Heart right ventricle (tissue), 16 donors: ENCODE measurements at regions of chr11 and their contacts with region 1.

Region 1: DNA sequence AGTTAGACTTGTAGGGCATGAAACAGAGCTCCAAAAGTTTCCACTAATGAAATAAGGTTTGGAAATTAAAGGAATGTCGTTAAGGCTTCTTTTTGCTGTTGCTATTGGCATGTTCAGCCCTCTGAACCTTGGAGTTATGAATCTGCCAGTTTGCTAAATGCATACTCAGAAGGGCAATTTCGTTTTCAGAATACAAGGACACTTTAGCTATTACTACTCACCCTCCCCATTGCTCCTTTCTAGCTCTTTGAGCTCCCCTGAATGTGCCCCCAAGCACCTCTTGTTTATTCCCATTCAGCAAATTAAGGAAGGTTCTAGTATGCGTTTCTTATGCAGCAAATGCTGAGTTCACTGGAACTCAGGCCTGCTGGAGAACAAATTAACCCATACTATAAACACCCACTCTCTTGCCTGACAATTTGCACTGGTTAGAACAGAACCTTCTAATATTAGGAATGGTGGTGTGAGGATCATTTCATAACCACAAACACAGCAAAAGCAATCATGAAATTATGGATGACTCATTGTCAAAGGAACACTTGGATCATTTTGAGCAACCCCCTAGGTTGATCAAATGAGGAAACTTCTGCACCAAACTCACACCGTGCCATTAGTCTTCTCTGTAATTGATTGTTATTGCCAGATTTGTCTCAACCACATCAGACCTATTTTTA is 26.2 kb upstream of the LIN7C start:
- DNase-seq: no peak
- ATAC-seq: peak in 1 of 8 donors; percentile 13
- H3K4me3 ChIP-seq: no peak overlapping the region
- H3K27ac ChIP-seq: no peak overlapping the region
- H3K4me1 ChIP-seq: no peaks in the 10 kb centered on the region
- H3K27me3 ChIP-seq: no peaks in the 10 kb centered on the region
- CTCF ChIP-seq: no peak

Region 2: DNA sequence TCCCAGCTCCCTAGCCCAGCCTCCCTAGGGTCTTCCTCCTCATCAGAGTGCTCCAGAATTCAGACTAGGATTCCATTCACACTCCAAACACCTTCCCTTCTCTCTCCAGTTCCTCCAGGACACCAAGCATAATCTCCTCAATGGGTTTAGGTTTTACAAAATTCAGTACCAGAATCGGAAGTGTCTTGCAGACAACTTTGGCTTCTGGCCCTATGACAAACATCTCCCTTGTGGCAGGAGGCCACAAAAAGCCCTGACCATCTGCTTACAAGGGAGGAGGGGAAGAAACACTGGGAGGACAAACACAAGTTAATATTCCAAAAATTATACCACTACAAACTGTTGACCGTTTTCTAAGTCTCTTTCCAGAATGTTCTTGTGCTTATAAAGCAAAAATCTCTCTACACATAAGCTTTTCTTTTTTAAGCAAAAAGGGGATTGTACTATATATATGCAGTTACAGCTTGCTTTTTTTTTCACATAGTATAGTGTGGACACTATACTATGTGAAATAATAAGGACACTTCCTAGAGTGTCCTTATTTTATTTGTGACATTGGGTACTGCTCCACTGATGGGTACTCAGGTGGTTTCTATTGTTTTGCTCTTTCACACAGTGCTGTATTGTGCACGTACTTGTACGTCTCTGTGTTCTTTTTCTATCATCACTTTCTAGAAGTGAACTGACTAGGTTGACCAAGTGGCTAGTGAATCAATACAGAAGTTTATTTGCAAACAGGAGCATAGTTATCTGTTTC is 88.8 kb after region 1 on chr11:
- intact Hi-C with region 1: loop called in 1 of 10 experiments (anchors 10 kb)
- DNase-seq: peak in 1 of 2 donors; percentile 24
- ATAC-seq: peak in 5 of 8 donors; percentile 34 to 61 (median 39)
- H3K4me3 ChIP-seq: no peak overlapping the region
- H3K27ac ChIP-seq: no peak overlapping the region
- H3K4me1 ChIP-seq: peaks cover 0 to 24% (median 18%) of the 10 kb centered on the region in 9 donors
- H3K27me3 ChIP-seq: no peaks in the 10 kb centered on the region
- CTCF ChIP-seq: no peak

Region 3: DNA sequence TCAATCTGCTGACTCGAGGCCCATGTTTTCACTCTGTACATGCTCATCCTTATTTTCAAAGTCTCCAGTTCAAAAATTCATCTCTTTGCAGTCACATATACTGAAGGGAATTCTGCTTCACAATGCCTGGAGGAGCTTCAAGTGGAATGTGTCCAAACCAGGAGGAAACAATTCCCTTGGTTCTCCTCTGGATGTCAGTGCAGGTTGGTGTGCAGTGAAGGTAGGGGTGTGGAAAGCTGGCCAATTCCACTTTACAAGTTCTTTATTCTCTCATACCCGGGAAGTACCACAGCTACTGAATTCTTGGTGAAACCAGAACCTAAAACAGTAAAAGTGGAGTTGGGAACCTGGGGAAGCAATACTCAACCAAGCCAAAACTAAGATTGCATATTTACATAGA is 110.2 kb after region 1 on chr11:
- intact Hi-C with region 1: loop called in 2 of 10 experiments (anchors 10 kb)
- DNase-seq: no peak
- ATAC-seq: peak in 1 of 8 donors; percentile 22
- H3K4me3 ChIP-seq: no peak overlapping the region
- H3K27ac ChIP-seq: no peak overlapping the region
- H3K4me1 ChIP-seq: peaks cover 0 to 18% (median 0%) of the 10 kb centered on the region in 9 donors
- H3K27me3 ChIP-seq: no peaks in the 10 kb centered on the region
- CTCF ChIP-seq: peak in 5 of 9 donors; percentile 11 to 22 (median 17)